Natural killer cell (primary cell): ENCODE measurements at regions of chr3 and their contacts with region 1.

Region 1: GRCh38 chr3:195909644-195910508 is 1.5 kb upstream of the TNK2 start:
- DNase-seq: peak; percentile 81 to 94
- ATAC-seq: peak; percentile 52 to 76 (median 60)
- H3K4me3 ChIP-seq: peak overlapping the region; percentile 39
- H3K4me3 Mint-ChIP-seq: peak overlapping the region; percentile 47
- H3K27ac ChIP-seq: peak overlapping the region; percentile 57
- H3K27ac Mint-ChIP-seq: peak overlapping the region; percentile 48 to 97
- H3K4me1 ChIP-seq: peaks cover 42% of the 10 kb centered on the region
- H3K4me1 Mint-ChIP-seq: peaks cover 34 to 38% of the 10 kb centered on the region in 2 donors
- H3K27me3 ChIP-seq: no peaks in the 10 kb centered on the region
- H3K27me3 Mint-ChIP-seq: no peaks in the 10 kb centered on the region
- CTCF ChIP-seq: no peak

Region 2: DNA sequence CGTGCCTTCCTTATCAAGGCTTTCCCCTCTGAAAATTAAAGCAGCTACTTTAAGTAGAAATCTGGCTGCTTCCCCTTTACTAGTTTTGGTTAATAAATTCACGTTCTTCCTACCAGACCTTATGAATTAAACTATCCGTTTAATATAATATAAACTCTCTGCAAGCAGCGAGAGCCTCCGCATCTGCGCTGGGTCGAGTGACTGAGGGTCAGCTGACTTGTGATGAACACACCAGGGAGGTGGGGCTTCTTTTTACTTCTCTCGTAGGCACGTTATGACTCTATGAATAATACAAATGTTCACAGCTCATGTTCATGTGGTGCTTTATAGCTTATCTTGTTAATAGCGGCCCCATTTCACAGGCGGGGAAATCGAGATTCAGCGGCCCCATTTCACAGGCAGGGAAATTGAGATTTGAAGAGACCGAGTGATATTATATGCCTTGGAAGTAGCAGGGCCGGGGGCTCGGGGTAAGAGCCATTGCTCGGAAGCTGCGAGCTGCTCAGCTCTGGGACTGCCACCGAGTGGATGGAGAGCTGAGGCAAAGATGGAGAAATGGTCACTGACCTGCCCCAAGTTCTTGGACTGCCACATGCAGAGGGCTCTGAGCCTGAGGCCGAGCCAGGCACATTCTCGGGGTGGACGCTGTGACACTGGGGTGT is 106.5 kb before region 1 on chr3:
- intact Hi-C with region 1: loop called (anchors 2 kb)
- DNase-seq: peak in 1 of 2 donors; percentile 46
- ATAC-seq: peak in 2 of 3 donors; percentile 55 to 61
- H3K4me3 ChIP-seq: no peak overlapping the region
- H3K4me3 Mint-ChIP-seq: peak overlapping the region; percentile 89
- H3K27ac ChIP-seq: peak overlapping the region; percentile 80
- H3K27ac Mint-ChIP-seq: peak overlapping the region; percentile 97
- H3K4me1 ChIP-seq: peaks cover 41% of the 10 kb centered on the region
- H3K4me1 Mint-ChIP-seq: peaks cover 60 to 73% of the 10 kb centered on the region in 2 donors
- H3K27me3 ChIP-seq: no peaks in the 10 kb centered on the region
- H3K27me3 Mint-ChIP-seq: no peaks in the 10 kb centered on the region
- CTCF ChIP-seq: no peak

Region 3: DNA sequence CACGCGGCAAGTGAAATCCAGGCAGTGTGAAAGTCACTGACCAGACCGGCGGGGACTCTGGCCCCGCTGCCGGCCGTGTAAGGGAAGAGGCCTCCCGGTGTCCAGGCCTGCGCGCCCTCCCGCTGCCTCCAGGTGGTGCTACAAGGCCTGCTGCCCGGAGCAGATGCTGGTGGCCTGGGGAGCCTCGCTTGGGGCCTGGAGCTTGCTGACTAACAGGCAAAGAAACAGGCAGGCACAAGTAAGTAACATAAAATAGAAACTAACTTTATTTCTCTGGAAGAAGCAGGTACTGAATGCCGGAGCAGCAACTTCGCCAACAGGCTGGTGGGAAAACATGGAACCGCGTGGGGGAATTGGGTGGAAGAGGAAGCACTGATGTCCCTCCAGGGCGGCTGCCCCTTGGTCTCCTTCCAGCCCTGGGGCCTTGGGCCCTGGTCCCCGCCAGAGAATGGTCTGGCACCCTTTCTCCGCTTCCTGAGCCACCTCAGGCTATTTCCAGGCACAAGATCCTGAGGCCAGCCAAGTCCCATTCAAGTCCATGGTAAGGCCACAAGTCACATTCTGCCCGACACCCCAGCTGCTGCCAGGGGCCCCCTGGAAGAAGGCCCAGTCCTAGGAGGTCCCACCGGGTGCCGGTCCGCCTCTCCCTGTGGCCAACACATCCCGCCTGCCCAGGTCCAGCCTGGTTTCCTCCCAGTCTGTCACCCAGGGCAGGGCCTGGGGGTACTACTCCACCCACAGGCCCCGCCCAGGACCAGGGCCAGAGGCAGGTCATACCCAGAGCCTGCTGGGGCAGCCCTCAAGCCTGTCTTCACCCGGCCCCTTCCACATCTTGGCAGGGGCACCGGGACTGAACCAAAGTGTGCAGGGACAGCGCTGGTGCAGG is 46.5 kb before region 1 on chr3:
- intact Hi-C with region 1: loop called (anchors 1 kb)
- DNase-seq: peak; percentile 65 to 70
- ATAC-seq: peak; percentile 86 to 95 (median 89)
- H3K4me3 ChIP-seq: no peak overlapping the region
- H3K4me3 Mint-ChIP-seq: no peak overlapping the region
- H3K27ac ChIP-seq: no peak overlapping the region
- H3K27ac Mint-ChIP-seq: peak overlapping the region; percentile 46 to 51
- H3K4me1 ChIP-seq: peaks cover 8% of the 10 kb centered on the region
- H3K4me1 Mint-ChIP-seq: peaks cover 11 to 17% of the 10 kb centered on the region in 2 donors
- H3K27me3 ChIP-seq: peaks cover 2% of the 10 kb centered on the region
- H3K27me3 Mint-ChIP-seq: peaks cover 0 to 4% of the 10 kb centered on the region in 2 donors
- CTCF ChIP-seq: peak; percentile 73

Region 4: DNA sequence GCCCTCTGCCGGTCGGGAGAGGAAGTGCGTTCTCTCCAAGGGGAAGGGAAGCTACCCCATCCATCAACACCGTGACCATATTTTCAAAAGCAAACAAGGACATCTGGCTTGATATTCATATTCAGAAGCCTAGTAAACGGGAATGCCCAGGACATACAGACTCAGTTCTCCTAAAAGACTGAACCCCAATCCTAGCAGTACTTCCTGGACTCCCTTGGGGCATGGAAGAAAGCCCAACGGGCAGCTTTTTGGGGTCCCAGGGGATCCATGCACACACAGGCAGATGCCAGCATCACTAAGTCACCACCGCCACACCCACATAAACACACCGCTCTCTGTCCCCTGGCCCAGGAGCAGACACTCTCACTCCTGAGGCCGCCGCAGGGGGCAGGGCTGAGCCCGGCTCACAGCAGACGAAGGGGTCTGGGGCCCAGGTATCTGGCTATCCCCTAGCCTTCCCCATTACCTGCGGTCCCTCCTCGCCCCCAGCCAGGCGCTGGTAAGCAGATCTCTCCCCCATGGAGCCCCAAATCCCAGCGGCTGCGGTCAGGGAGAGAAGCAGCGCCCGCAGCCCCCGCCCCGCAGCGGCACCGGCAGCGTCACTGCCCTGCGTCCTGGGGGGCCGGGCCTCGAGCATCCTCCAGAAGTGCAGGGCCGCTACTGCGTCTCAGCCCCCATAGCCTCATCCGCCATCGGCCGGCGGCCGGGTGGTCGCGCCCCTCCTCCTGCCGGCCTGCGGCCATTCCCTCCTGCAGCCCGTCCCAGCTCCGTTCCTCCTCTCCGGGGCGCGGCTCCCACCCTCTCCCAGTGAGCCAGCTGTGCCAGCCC is 14.9 kb before region 1 on chr3:
- intact Hi-C with region 1: loop called (anchors 1 kb)
- DNase-seq: peak; percentile 52 to 89
- ATAC-seq: peak; percentile 63 to 81 (median 74)
- H3K4me3 ChIP-seq: peak overlapping the region; percentile 78
- H3K4me3 Mint-ChIP-seq: peak overlapping the region; percentile 97
- H3K27ac ChIP-seq: peak overlapping the region; percentile 86
- H3K27ac Mint-ChIP-seq: peak overlapping the region; percentile 94 to 95
- H3K4me1 ChIP-seq: peaks cover 55% of the 10 kb centered on the region
- H3K4me1 Mint-ChIP-seq: peaks cover 39 to 54% of the 10 kb centered on the region in 2 donors
- H3K27me3 ChIP-seq: no peaks in the 10 kb centered on the region
- H3K27me3 Mint-ChIP-seq: no peaks in the 10 kb centered on the region
- CTCF ChIP-seq: peak; percentile 93